ENCODE measurements at regions of chr14 and their contacts with region 1.

Region 1: GRCh38 chr14:59576332-59577294 is at the start of gene CCDC175:
- DNase-seq: peak; percentile 87
- ATAC-seq: peak; percentile 94
- H3K4me3 Mint-ChIP-seq: peak within 1 kb of the TSS; percentile 64
- H3K27ac Mint-ChIP-seq: peak within 1 kb of the TSS; percentile 47
- H3K4me1 Mint-ChIP-seq: peaks cover 11% of the 10 kb centered on the region
- H3K27me3 Mint-ChIP-seq: peaks cover 17% of the 10 kb centered on the region
- total RNA-seq, gene CCDC175: not detected

Region 2: GRCh38 chr14:59483900-59484638 is 92.5 kb before region 1 on chr14 and contains the starts of genes JKAMP and L3HYPDH:
- CTCF ChIA-PET with region 1: interaction called, 14 read pairs
- POLR2A ChIA-PET with region 1: no interaction called
- DNase-seq: peak; percentile 98
- ATAC-seq: peak; percentile 92
- H3K4me3 Mint-ChIP-seq: peak within 1 kb of the TSS; percentile 85
- H3K27ac Mint-ChIP-seq: peak within 1 kb of the TSS; percentile 88
- H3K4me1 Mint-ChIP-seq: peaks cover 58% of the 10 kb centered on the region
- H3K27me3 Mint-ChIP-seq: no peaks in the 10 kb centered on the region
- total RNA-seq, gene JKAMP: 24.4 to 28.6 TPM
- total RNA-seq, gene L3HYPDH: 17.6 to 17.7 TPM

Region 3: GRCh38 chr14:59507063-59507780 is 69.4 kb before region 1 on chr14:
- CTCF ChIA-PET with region 1: interaction called, 28 read pairs
- POLR2A ChIA-PET with region 1: interaction called, 3 read pairs
- DNase-seq: peak; percentile 70
- ATAC-seq: peak; percentile 90
- H3K4me3 Mint-ChIP-seq: no peak overlapping the region
- H3K27ac Mint-ChIP-seq: no peak overlapping the region
- H3K4me1 Mint-ChIP-seq: peaks cover 11% of the 10 kb centered on the region
- H3K27me3 Mint-ChIP-seq: peaks cover 12% of the 10 kb centered on the region

Region 4: DNA sequence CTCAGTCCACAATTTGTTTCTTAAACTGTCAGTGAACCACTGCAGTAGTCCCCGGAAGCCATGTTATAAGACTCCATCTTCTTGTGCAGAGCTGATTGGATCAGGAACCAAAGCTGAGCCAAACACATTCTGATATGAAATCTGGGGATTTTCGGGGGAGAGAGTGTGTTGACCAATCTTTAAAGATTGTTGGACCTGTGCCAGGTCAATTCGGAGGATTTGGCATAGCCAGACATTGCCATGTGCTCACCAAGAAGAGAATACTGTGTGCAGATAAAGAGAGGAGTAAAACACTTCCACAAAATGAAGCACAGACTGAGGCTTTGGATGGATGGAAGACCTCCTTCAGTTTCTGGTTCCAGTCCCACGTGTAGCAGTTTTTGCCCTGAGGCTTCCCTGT is 16.3 kb before region 1 on chr14:
- CTCF ChIA-PET with region 1: interaction called, 11 read pairs
- POLR2A ChIA-PET with region 1: no interaction called
- DNase-seq: no peak
- ATAC-seq: no peak
- H3K4me3 Mint-ChIP-seq: no peak overlapping the region
- H3K27ac Mint-ChIP-seq: no peak overlapping the region
- H3K4me1 Mint-ChIP-seq: no peaks in the 10 kb centered on the region
- H3K27me3 Mint-ChIP-seq: peaks cover 29% of the 10 kb centered on the region

Region 5: GRCh38 chr14:60235440-60235839 is 658.8 kb after region 1 on chr14:
- CTCF ChIA-PET with region 1: no interaction called
- POLR2A ChIA-PET with region 1: no interaction called
- DNase-seq: no peak
- ATAC-seq: no peak
- H3K4me3 Mint-ChIP-seq: no peak overlapping the region
- H3K27ac Mint-ChIP-seq: no peak overlapping the region
- H3K4me1 Mint-ChIP-seq: no peaks in the 10 kb centered on the region
- H3K27me3 Mint-ChIP-seq: peaks cover 3% of the 10 kb centered on the region